ENCODE measurements at regions of chr12 and their contacts with region 1.

Region 1: GRCh38 chr12:75511116-75512048 is at the start of gene KRR1:
- DNase-seq: peak; percentile 92 to 99 (median 94)

Region 2: DNA sequence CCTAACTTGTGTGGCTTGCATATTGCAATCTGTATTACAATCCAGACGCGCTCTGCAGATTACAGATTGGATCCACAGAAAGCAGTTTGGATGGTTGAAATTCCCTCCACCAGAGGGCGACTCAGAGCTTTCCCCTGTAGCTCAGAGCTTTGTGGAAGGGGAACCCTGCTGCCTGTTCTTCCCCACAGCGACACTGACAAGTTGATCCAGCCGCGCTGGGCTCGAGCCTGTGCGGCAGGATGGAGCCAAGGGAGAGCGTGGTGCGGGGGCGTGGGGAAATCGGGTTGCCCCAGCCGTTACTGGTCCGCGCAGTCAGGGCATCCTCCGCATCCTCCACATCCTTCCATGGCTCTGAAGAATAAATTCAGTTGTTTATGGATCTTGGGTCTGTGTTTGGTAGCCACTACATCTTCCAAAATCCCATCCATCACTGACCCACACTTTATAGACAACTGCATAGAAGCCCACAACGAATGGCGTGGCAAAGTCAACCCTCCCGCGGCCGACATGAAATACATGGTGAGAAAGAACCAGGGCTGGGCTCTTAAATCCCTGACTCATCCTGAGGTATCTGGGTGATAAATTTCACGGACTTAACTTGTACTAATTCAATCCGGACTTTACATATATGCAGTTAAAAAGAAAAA is 176.9 kb before region 1 on chr12 and contains the start of gene GLIPR1L1:
- intact Hi-C with region 1: loop called (anchors 5 kb)
- DNase-seq: peak; percentile 67 to 96 (median 88)

Region 3: DNA sequence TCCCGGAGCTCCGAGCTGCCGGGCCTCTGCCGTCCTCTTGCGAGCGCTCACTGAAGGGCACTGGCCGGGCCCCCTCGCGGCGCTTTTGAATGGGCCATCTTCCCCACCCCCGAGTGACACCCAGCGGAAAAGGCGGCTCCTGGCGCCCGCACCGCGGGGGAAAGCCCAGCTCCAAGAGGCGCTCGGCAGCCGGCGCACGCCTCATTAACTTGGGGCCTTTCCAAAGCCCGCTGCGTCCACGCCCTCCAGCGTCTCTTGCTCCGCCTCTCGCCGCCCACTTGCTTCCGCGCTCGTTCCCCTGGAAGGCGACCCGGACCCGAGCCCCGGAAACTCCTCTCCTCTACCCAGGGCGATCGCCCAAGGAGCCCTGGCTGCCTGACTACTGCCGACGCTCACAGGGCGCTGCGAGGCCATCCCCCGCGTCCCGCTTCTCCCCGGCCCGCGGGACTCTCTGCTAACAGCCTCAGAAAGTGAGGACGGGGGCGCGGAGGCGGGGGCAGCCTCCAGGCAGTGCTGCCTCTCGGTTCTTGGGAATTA is 520.2 kb after region 1 on chr12 and contains the start of gene PHLDA1:
- intact Hi-C with region 1: loop called (anchors 5 kb)
- DNase-seq: peak; percentile 84 to 98 (median 94)

Measured in posterior cingulate gyrus (tissue), 11 donors.